Activated CD8-positive, alpha-beta T cell treated with anti-CD3 and anti-CD28 coated beads, Interleukin-2, amount 10 ng/mL, durations not matched to agents 7 days and 5 days (primary cell): ENCODE measurements at regions of chr2 and their contacts with region 1.

Region 1: DNA sequence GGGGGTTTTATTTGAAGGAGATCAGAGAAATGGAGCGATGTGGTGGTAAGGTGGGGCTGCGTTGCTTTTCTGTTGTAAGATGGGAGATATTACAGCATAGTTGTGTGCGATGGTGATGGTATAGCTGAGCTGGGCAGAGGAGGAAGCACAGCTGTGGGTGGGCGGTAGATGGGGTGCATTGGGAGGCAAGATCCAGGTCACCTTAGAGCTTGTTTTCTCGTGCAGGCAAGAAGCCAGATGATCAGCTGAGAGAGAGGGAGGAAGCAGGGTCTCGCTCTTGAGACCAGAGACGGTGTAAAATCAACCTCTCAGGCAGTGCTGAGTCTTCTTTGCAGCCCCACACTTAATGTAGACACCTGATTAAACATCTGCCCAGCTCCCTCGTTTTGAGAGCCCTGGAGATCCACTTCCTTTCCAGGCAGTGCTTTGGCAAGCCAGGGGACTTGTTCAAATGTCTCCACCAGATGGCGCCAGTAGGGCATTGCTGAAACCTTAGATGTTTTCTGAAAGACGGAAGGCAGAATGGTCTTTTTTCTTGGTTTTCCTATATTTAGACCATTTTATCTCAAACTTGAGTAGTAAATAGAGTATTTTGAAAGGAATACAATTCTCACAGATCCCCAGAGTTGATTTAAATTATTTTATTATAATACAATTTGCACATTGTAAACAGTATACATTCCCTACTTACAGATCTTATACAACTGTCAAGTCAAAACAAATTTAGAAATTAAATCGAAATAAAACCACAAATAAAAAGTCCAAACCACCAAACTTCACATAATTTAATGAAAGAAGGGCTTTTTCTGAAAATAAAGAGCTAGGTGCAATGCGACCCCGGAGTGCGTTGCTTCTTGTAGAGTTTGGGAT is 21.1 kb upstream of the LYPD6B start:
- DNase-seq: peak; percentile 85
- ATAC-seq: peak; percentile 81
- H3K4me3 Mint-ChIP-seq: no peak overlapping the region
- H3K27ac Mint-ChIP-seq: no peak overlapping the region
- H3K4me1 Mint-ChIP-seq: no peaks in the 10 kb centered on the region
- H3K27me3 Mint-ChIP-seq: no peaks in the 10 kb centered on the region

Region 2: GRCh38 chr2:149000158-149000938 is 17.0 kb before region 1 on chr2:
- CTCF ChIA-PET with region 1: interaction called, 14 read pairs
- POLR2A ChIA-PET with region 1: no interaction called
- DNase-seq: no peak
- ATAC-seq: no peak
- H3K4me3 Mint-ChIP-seq: no peak overlapping the region
- H3K27ac Mint-ChIP-seq: no peak overlapping the region
- H3K4me1 Mint-ChIP-seq: no peaks in the 10 kb centered on the region
- H3K27me3 Mint-ChIP-seq: no peaks in the 10 kb centered on the region

Region 3: DNA sequence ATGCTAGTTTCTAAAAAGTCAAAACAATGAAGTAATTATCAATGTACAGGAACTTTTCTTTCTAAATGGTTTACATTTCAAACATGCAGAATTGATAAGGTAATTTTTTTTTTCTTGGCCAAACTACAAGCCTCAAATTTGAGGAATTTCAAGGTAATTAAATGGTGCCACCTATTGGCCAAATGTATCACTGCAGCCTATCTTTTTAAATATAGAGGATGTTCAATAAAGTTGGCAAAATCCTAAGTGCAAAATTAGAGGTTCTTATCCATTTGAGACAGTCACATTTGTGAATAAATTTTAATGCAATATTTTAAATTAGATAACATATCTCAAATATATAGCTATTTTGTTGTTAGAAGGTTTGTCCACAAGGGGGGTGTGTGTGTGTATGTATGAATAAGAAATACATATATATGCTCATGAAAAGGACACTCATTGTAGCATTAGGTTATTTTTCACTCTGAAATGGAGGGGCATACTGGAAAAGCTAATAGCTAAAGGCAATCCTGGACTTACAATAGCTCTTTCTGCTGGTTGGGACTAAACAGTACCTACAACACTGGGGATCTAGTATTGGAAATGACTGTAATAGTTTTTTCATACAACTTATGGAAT is 544.1 kb after region 1 on chr2:
- CTCF ChIA-PET with region 1: interaction called, 33 read pairs
- POLR2A ChIA-PET with region 1: interaction called, 3 read pairs
- DNase-seq: peak; percentile 50
- ATAC-seq: no peak
- H3K4me3 Mint-ChIP-seq: no peak overlapping the region
- H3K27ac Mint-ChIP-seq: no peak overlapping the region
- H3K4me1 Mint-ChIP-seq: peaks cover 2% of the 10 kb centered on the region
- H3K27me3 Mint-ChIP-seq: peaks cover 7% of the 10 kb centered on the region

Region 4: DNA sequence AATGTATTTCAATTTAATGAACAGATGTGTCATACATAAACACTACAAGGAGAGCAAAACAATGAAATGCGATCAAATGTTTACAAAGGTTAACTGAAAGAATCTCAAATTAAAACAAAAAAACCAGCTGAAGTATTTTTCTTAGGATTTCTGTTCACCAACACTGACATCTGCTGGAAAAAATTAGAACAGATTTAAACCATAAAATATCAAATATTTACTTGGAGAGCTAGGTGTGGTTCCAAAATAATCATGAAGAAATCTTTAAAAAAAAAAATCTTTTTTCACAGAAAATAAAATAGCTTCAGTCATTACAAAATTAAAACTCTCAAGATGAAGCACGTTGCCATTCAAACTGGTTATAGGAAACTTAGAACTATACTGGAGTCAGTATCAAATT is 556.4 kb after region 1 on chr2:
- CTCF ChIA-PET with region 1: interaction called, 13 read pairs
- POLR2A ChIA-PET with region 1: no interaction called
- DNase-seq: no peak
- ATAC-seq: no peak
- H3K4me3 Mint-ChIP-seq: no peak overlapping the region
- H3K27ac Mint-ChIP-seq: no peak overlapping the region
- H3K4me1 Mint-ChIP-seq: peaks cover 5% of the 10 kb centered on the region
- H3K27me3 Mint-ChIP-seq: no peaks in the 10 kb centered on the region